Mammary epithelial cell (primary cell): ENCODE measurements at regions of chr11 and their contacts with region 1.

Region 1: GRCh38 chr11:81787584-81788049 is 946.0 kb downstream of the FAM181B start:
- DNase-seq: peak; percentile 58
- H3K4me3 ChIP-seq: no peak overlapping the region
- H3K27ac ChIP-seq: no peak overlapping the region
- H3K4me1 ChIP-seq: no peaks in the 10 kb centered on the region
- H3K27me3 ChIP-seq: no peaks in the 10 kb centered on the region
- CTCF ChIP-seq: peak; percentile 31 to 53

Region 2: GRCh38 chr11:81819462-81819861 is 31.8 kb after region 1 on chr11:
- CTCF ChIA-PET with region 1: interaction called, 11 read pairs
- dilution Hi-C with region 1: no loop called
- in situ Hi-C with region 1: no loop called
- intact Hi-C with region 1: no loop called
- DNase-seq: no peak
- H3K4me3 ChIP-seq: no peak overlapping the region
- H3K27ac ChIP-seq: no peak overlapping the region
- H3K4me1 ChIP-seq: no peaks in the 10 kb centered on the region
- H3K27me3 ChIP-seq: no peaks in the 10 kb centered on the region
- CTCF ChIP-seq: no peak

Region 3: GRCh38 chr11:81963018-81963417 is 175.4 kb after region 1 on chr11:
- CTCF ChIA-PET with region 1: interaction called, 4 read pairs
- dilution Hi-C with region 1: no loop called
- in situ Hi-C with region 1: no loop called
- intact Hi-C with region 1: loop called (anchors 10 kb)
- DNase-seq: no peak
- H3K4me3 ChIP-seq: no peak overlapping the region
- H3K27ac ChIP-seq: no peak overlapping the region
- H3K4me1 ChIP-seq: no peaks in the 10 kb centered on the region
- H3K27me3 ChIP-seq: no peaks in the 10 kb centered on the region
- CTCF ChIP-seq: peak; percentile 42 to 52

Region 4: GRCh38 chr11:82229341-82229740 is 441.7 kb after region 1 on chr11:
- CTCF ChIA-PET with region 1: no interaction called
- dilution Hi-C with region 1: no loop called
- in situ Hi-C with region 1: no loop called
- intact Hi-C with region 1: loop called (anchors 2 kb)
- DNase-seq: peak; percentile 2
- H3K4me3 ChIP-seq: no peak overlapping the region
- H3K27ac ChIP-seq: no peak overlapping the region
- H3K4me1 ChIP-seq: no peaks in the 10 kb centered on the region
- H3K27me3 ChIP-seq: no peaks in the 10 kb centered on the region
- CTCF ChIP-seq: peak; percentile 37 to 56